ENCODE measurements at regions of chr19 and their contacts with region 1.

Region 1: DNA sequence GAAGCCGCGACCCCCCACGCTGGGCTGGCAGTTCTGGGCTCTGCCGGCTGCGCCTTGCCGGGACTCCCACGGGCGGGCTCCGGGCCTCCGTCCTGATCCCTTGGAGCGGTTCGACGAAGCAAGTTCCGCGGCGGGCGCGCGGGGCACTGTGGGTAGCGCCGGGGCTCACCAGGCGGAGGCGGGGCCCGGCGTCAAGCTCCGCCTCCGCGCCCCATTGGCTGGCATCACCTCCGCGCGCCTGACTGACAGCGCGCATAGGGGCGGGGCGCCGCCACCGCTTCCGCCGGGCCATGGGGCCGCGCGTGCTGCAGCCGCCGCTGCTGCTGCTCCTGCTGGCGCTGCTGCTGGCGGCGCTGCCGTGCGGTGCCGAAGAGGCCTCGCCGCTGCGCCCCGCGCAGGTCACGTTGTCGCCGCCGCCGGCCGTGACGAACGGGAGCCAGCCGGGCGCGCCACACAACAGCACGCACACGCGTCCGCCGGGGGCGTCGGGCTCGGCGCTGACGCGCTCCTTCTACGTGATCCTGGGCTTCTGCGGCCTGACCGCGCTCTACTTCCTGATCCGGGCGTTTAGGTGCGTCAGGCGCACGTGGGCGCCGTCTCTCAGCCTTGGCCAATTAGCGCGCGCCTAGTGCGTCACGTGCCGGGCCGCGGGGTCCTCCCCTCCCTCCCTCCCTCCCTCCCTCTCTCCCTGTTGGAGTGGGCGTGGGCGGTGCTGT is at the start of gene FAM174C:
- DNase-seq: peak; percentile 86 to 98 (median 92)
- ATAC-seq: peak; percentile 76
- H3K4me3 ChIP-seq: peak within 1 kb of the TSS; percentile 68
- H3K27ac ChIP-seq: peak within 1 kb of the TSS; percentile 92
- H3K4me1 ChIP-seq: peaks cover 53 to 94% of the 10 kb centered on the region in 2 experiments
- H3K27me3 ChIP-seq: no peaks in the 10 kb centered on the region
- CTCF ChIP-seq: peak in 1 of 3 experiments; percentile 20; a peak in 1 of 6 replicates
- EP300 ChIP-seq: no peak
- POLR2A ChIP-seq: peak; percentile 90
- RAD21 ChIP-seq: no peak
- polyA plus RNA-seq, gene FAM174C: 0.66 to 2.7 TPM

Region 2: GRCh38 chr19:1260636-1261537 is 14.5 kb before region 1 on chr19:
- CTCF ChIA-PET with region 1: no interaction called
- POLR2A ChIA-PET with region 1: interaction called, 14 read pairs
- in situ Hi-C with region 1: no loop called
- intact Hi-C with region 1: no loop called
- DNase-seq: peak; percentile 89 to 98 (median 93)
- ATAC-seq: peak; percentile 90
- H3K4me3 ChIP-seq: peak overlapping the region; percentile 66
- H3K27ac ChIP-seq: peak overlapping the region; percentile 83
- H3K4me1 ChIP-seq: peaks cover 61 to 95% of the 10 kb centered on the region in 2 experiments
- H3K27me3 ChIP-seq: no peaks in the 10 kb centered on the region
- CTCF ChIP-seq: no peak
- EP300 ChIP-seq: no peak
- POLR2A ChIP-seq: no peak
- RAD21 ChIP-seq: no peak

Region 3: GRCh38 chr19:1373534-1374249 is 98.3 kb after region 1 on chr19:
- CTCF ChIA-PET with region 1: interaction called, 7 read pairs
- POLR2A ChIA-PET with region 1: interaction called, 3 read pairs
- in situ Hi-C with region 1: no loop called
- intact Hi-C with region 1: loop called (anchors 1 kb)
- DNase-seq: no peak
- ATAC-seq: no peak
- H3K4me3 ChIP-seq: no peak overlapping the region
- H3K27ac ChIP-seq: no peak overlapping the region
- H3K4me1 ChIP-seq: peaks cover 0 to 50% of the 10 kb centered on the region in 2 experiments; a peak in 2 of 5 replicates
- H3K27me3 ChIP-seq: no peaks in the 10 kb centered on the region
- CTCF ChIP-seq: no peak
- EP300 ChIP-seq: no peak
- POLR2A ChIP-seq: no peak
- RAD21 ChIP-seq: no peak

Region 4: GRCh38 chr19:1383311-1384084 is 108.1 kb after region 1 on chr19 and contains the start of gene NDUFS7:
- CTCF ChIA-PET with region 1: no interaction called
- POLR2A ChIA-PET with region 1: interaction called, 5 read pairs
- in situ Hi-C with region 1: loop called (anchors 5 kb)
- intact Hi-C with region 1: no loop called
- DNase-seq: peak; percentile 75 to 95 (median 80)
- ATAC-seq: peak; percentile 91
- H3K4me3 ChIP-seq: peak within 1 kb of the TSS; percentile 91
- H3K27ac ChIP-seq: peak within 1 kb of the TSS; percentile 97
- H3K4me1 ChIP-seq: peaks cover 0 to 49% of the 10 kb centered on the region in 2 experiments; a peak in 2 of 5 replicates
- H3K27me3 ChIP-seq: no peaks in the 10 kb centered on the region
- CTCF ChIP-seq: peak; percentile 34 to 49 (median 47); a peak in 5 of 6 replicates
- EP300 ChIP-seq: peak; percentile 66; the same call in 1 of the 2 replicates
- POLR2A ChIP-seq: peak; percentile 82
- RAD21 ChIP-seq: peak; percentile 35; a peak in 2 of 4 replicates
- polyA plus RNA-seq, gene NDUFS7: 28.2 to 60.6 TPM

Region 5: GRCh38 chr19:1445185-1445931 is 169.9 kb after region 1 on chr19:
- CTCF ChIA-PET with region 1: no interaction called
- POLR2A ChIA-PET with region 1: interaction called, 3 read pairs
- in situ Hi-C with region 1: no loop called
- intact Hi-C with region 1: loop called (anchors 10 kb)
- DNase-seq: peak; percentile 82 to 89 (median 85)
- ATAC-seq: peak; percentile 84
- H3K4me3 ChIP-seq: peak overlapping the region; percentile 41
- H3K27ac ChIP-seq: peak overlapping the region; percentile 47; the same call in 2 of the 3 replicates
- H3K4me1 ChIP-seq: peaks cover 33 to 82% of the 10 kb centered on the region in 2 experiments
- H3K27me3 ChIP-seq: peaks cover 0 to 1% of the 10 kb centered on the region in 2 experiments; a peak in 1 of 5 replicates
- CTCF ChIP-seq: peak; percentile 90 to 94 (median 91)
- EP300 ChIP-seq: no peak; the same call in 1 of the 2 replicates
- POLR2A ChIP-seq: no peak
- RAD21 ChIP-seq: peak; percentile 61